Ovary (tissue), 10 donors: ENCODE measurements at regions of chr11 and their contacts with region 1.

Region 1: GRCh38 chr11:113675003-113675561 is 31.0 kb downstream of the TMPRSS5 start:
- DNase-seq: no peak
- H3K4me3 ChIP-seq: no peak overlapping the region
- H3K27ac ChIP-seq: no peak overlapping the region
- H3K4me1 ChIP-seq: no peaks in the 10 kb centered on the region
- H3K27me3 ChIP-seq: no peaks in the 10 kb centered on the region
- CTCF ChIP-seq: no peak
- EP300 ChIP-seq: no peak
- POLR2A ChIP-seq: no peak

Region 2: GRCh38 chr11:112724496-112724790 is 950.6 kb before region 1 on chr11:
- intact Hi-C with region 1: loop called in 1 of 4 experiments (anchors 10 kb)
- DNase-seq: no peak
- H3K4me3 ChIP-seq: no peak overlapping the region
- H3K27ac ChIP-seq: no peak overlapping the region
- H3K4me1 ChIP-seq: no peaks in the 10 kb centered on the region
- H3K27me3 ChIP-seq: no peaks in the 10 kb centered on the region
- CTCF ChIP-seq: no peak
- EP300 ChIP-seq: no peak
- POLR2A ChIP-seq: no peak